ENCODE measurements at regions of chr1 and their contacts with region 1.

Region 1: DNA sequence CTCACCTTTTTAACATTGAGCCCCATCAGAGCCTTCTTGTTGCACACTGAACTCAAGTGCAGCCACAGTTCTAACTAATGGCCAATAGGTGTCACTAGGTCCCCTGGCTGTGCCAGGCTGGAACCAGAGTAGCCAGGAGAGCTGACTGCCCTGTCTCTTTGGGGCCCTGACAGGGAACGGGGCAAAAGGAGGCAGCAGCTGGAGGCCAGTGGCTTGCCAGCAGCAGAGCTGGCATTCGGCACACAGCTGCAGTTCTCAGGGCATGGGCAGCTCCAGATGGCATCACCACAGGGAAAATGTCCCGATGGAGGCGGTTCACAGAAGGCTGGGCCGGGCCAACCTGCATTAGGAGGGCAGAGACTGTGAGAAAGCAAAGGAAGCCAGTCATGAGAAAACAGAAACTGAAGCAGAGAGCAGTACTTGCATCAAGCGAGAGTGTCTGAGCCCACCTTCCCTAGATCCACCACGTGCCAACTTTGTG is 188.6 kb downstream of the FCRL5 start:
- DNase-seq: peak; percentile 4
- ATAC-seq: no peak
- H3K4me3 Mint-ChIP-seq: no peak overlapping the region
- H3K27ac Mint-ChIP-seq: no peak overlapping the region
- H3K4me1 Mint-ChIP-seq: no peaks in the 10 kb centered on the region
- H3K27me3 Mint-ChIP-seq: peaks cover 2% of the 10 kb centered on the region
- CTCF ChIP-seq: peak; percentile 49

Region 2: GRCh38 chr1:157193702-157194391 is 169.9 kb before region 1 on chr1:
- CTCF ChIA-PET with region 1: no interaction called
- POLR2A ChIA-PET with region 1: no interaction called
- intact Hi-C with region 1: loop called (anchors 10 kb)
- DNase-seq: peak; percentile 81
- ATAC-seq: peak; percentile 61
- H3K4me3 Mint-ChIP-seq: no peak overlapping the region
- H3K27ac Mint-ChIP-seq: no peak overlapping the region
- H3K4me1 Mint-ChIP-seq: no peaks in the 10 kb centered on the region
- H3K27me3 Mint-ChIP-seq: peaks cover 17% of the 10 kb centered on the region
- CTCF ChIP-seq: peak; percentile 85

Region 3: GRCh38 chr1:157490467-157491165 is 126.9 kb after region 1 on chr1:
- CTCF ChIA-PET with region 1: interaction called, 29 read pairs
- POLR2A ChIA-PET with region 1: no interaction called
- intact Hi-C with region 1: loop called (anchors 5 kb)
- DNase-seq: peak; percentile 85
- ATAC-seq: peak; percentile 53
- H3K4me3 Mint-ChIP-seq: no peak overlapping the region
- H3K27ac Mint-ChIP-seq: no peak overlapping the region
- H3K4me1 Mint-ChIP-seq: no peaks in the 10 kb centered on the region
- H3K27me3 Mint-ChIP-seq: peaks cover 14% of the 10 kb centered on the region
- CTCF ChIP-seq: peak; percentile 71